ENCODE measurements at regions of chr7 and their contacts with region 1.

Region 1: DNA sequence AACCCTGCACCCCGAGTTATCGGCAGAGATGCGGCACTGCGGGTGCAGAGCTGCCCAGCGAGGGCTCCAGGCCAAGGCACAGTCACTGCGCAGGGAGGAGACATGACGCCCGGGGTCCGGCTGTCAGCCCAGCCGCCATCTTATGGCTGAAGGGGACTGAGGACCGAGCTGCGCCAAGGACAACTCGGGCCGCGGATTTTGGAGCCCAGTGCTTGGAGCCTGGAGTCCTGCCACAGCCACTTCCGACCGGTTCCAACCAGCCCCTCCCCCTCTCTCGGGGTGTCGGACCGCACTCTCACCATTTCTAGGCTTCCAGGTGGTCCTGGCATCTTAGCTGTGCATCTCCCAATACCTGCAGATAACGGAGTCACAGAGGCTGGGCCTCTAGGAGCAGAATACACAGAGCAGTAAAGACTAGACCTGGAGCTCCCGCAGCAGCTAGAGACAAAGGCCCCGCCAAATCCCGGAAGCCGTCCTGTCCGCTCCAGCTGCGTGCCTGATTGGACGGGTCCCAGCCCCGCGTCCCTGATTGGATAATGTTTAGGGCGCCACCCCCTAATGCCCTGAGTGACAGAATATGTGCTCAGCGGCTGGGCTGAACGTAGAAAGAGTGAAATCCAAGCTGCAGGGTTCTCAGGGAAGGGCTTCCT is at the start of gene ZNF680:
- DNase-seq: peak; percentile 94
- ATAC-seq: peak; percentile 100
- H3K4me3 Mint-ChIP-seq: peak within 1 kb of the TSS; percentile 100
- H3K27ac Mint-ChIP-seq: peak within 1 kb of the TSS; percentile 100
- H3K4me1 Mint-ChIP-seq: peaks cover 24% of the 10 kb centered on the region
- H3K27me3 Mint-ChIP-seq: no peaks in the 10 kb centered on the region
- total RNA-seq, gene ZNF680: 12.9 to 13.1 TPM

Region 2: GRCh38 chr7:64307254-64308015 is 255.3 kb before region 1 on chr7:
- CTCF ChIA-PET with region 1: no interaction called
- POLR2A ChIA-PET with region 1: interaction called, 27 read pairs
- DNase-seq: peak; percentile 96
- ATAC-seq: peak; percentile 100
- H3K4me3 Mint-ChIP-seq: peak overlapping the region; percentile 90
- H3K27ac Mint-ChIP-seq: peak overlapping the region; percentile 98
- H3K4me1 Mint-ChIP-seq: peaks cover 21% of the 10 kb centered on the region
- H3K27me3 Mint-ChIP-seq: no peaks in the 10 kb centered on the region

Region 3: DNA sequence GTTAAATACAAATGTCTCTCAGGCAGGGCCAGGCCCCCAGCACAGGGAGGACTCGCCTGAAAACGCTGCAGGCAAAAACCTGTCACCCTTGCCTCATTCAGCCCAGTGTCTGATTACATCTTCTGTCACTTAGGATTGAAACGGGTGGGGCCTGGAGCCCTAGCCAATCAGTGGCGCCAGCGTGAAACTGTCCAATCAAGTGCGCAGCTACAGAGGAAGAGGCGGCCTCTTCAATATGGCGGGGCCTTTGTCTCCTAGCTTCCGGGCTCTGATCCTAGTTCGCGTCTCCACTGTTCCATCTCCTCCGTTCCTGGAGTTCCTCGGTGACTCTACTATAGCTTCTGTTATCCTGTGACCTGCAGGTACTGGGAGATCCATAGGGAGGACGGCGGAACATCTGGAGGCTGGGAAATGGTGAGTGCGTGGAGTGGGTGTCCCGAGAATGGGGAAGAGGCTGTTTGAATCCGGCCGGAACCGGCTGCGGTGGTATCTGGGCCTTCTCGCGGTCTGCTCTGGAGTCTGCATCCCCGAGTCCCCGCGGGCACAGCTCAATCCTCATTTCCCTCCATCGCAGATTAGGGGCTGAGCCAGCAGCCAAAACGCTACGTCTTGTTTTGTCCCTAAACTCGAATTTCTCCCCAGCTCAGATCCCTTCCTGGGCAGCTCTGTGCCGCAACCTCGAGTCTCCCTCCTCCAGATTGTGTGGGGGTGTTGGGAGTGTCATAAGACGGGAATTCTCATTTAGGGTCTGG is 248.8 kb before region 1 on chr7 and contains the start of gene ZNF736:
- CTCF ChIA-PET with region 1: no interaction called
- POLR2A ChIA-PET with region 1: interaction called, 27 read pairs
- DNase-seq: peak; percentile 93
- ATAC-seq: peak; percentile 100
- H3K4me3 Mint-ChIP-seq: peak within 1 kb of the TSS; percentile 98
- H3K27ac Mint-ChIP-seq: peak within 1 kb of the TSS; percentile 99
- H3K4me1 Mint-ChIP-seq: peaks cover 33% of the 10 kb centered on the region
- H3K27me3 Mint-ChIP-seq: no peaks in the 10 kb centered on the region
- total RNA-seq, gene ZNF736: 26.0 to 27.4 TPM

Region 4: GRCh38 chr7:64528770-64529169 is 34.0 kb before region 1 on chr7:
- CTCF ChIA-PET with region 1: no interaction called
- POLR2A ChIA-PET with region 1: no interaction called
- DNase-seq: no peak
- ATAC-seq: no peak
- H3K4me3 Mint-ChIP-seq: no peak overlapping the region
- H3K27ac Mint-ChIP-seq: peak overlapping the region; percentile 72
- H3K4me1 Mint-ChIP-seq: peaks cover 24% of the 10 kb centered on the region
- H3K27me3 Mint-ChIP-seq: no peaks in the 10 kb centered on the region